AG04450 (cell line): ENCODE measurements at regions of chr6 and their contacts with region 1.

Region 1: GRCh38 chr6:107357031-107357430 is 102.3 kb downstream of the PDSS2 start:
- DNase-seq: no peak
- H3K4me3 ChIP-seq: no peak overlapping the region
- H3K27ac ChIP-seq: no peak overlapping the region
- H3K27me3 ChIP-seq: no peaks in the 10 kb centered on the region
- CTCF ChIP-seq: no peak

Region 2: DNA sequence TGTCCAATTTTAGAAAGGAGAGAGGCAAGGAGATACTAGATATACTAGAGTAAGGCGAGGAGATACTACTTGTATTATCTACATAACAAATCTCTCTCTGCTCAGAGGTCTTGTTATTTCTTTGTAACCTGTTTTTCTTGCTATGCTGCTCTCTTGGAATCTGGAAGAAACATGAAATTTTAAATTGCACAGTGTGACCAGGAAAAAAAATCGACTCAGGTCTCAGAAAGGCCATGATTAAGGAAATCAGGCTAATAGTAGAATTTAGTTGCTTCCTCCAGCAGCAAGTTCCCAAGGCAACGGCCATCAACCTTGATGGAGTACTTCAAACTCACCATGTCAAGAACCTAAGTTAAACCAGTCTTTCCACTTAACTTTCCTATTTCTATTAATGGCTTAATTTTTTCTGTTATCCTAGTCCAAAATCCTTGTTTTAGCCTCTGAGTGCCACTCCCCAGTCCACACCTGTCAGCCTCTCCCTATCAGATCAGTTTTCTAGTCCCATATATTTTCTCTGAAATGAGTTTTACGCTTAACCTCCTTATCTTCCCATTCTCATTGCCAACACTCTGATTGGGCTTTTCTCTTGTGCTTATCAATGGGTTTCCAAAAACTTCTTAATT is 154.1 kb before region 1 on chr6:
- CTCF ChIA-PET with region 1: interaction called, 11 read pairs
- POLR2A ChIA-PET with region 1: no interaction called
- DNase-seq: no peak
- H3K4me3 ChIP-seq: no peak overlapping the region
- H3K27ac ChIP-seq: no peak overlapping the region
- H3K27me3 ChIP-seq: no peaks in the 10 kb centered on the region
- CTCF ChIP-seq: no peak

Region 3: GRCh38 chr6:107345393-107345792 is 11.6 kb before region 1 on chr6:
- CTCF ChIA-PET with region 1: no interaction called
- POLR2A ChIA-PET with region 1: no interaction called
- DNase-seq: no peak
- H3K4me3 ChIP-seq: no peak overlapping the region
- H3K27ac ChIP-seq: no peak overlapping the region
- H3K27me3 ChIP-seq: no peaks in the 10 kb centered on the region
- CTCF ChIP-seq: no peak

Region 4: DNA sequence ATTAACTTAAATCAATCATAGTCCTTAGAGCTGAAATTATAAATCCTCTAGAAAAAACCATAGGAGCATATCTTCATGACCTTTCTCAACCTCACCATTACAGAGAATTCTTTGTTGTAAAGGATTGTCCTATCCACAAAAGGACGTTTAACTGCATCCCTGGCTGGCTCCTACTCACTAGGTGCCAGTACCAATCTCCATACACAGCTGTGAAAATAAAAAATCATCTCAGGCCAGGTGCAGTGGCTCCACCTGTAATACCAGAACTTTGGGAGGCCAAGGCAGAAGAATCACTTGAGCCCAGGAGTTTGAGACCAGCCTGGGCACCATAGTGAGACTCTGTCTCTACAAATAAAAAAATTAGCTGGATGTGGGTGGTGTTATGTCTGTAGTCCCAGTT is 12.5 kb after region 1 on chr6:
- CTCF ChIA-PET with region 1: no interaction called
- POLR2A ChIA-PET with region 1: no interaction called
- DNase-seq: no peak
- H3K4me3 ChIP-seq: no peak overlapping the region
- H3K27ac ChIP-seq: no peak overlapping the region
- H3K27me3 ChIP-seq: no peaks in the 10 kb centered on the region
- CTCF ChIP-seq: no peak